Head of caudate nucleus (tissue), 42 donors: ENCODE measurements at regions of chr4 and their contacts with region 1.

Region 1: GRCh38 chr4:39181905-39182638 is at the start of gene WDR19:
- DNase-seq: peak; percentile 97 to 100 (median 100)

Region 2: DNA sequence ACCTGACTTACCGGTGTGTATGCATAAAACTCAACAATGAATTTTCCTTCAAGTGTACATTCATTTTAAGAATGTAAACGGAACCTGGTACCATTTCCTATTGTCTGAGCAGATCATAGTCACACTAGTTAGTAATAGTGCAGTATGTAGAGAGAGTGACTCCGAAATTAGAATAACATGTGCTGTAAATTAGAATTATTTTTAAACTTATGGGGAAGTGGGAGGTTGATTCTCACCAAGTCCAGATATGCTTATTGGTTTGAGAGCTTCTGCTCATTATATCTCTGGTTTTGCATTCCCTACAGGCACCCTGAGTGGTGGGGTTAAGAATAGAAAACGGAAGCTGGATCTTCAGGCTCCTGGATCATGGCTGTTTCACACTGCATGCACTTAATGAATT is 478.4 kb before region 1 on chr4:
- intact Hi-C with region 1: no loop called
- DNase-seq: no peak

Region 3: DNA sequence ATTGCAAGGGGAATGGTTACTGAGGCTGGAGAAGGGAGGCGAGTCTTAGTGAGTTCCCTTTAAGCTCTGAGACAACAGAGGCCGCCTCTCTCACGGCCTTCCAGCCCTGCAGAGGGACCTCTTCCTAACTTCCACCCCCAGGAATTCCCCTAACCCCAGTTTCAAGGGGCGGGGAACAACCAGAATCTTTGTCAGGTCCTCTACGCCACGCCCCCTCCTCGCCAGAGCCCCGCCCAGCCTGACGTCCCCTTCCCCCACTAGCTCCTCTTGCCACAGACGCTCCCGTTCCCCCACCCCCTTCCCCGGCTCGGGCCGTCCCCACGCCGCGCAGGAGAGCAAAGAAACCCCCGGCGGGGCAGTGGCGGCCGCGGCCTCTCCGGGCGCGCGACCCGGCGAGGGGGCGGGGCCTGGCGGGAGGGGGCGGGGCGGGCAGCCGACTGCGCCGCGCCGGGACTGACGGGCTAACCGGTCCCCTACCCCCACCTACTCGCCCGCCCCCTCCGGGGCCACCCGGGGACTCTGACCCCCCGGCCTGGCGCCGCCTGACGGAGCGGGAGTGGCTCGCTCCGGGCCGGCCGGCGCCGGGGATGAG is 137.6 kb before region 1 on chr4:
- intact Hi-C with region 1: loop called (anchors 10 kb)
- DNase-seq: peak; percentile 78 to 95 (median 90)

Region 4: DNA sequence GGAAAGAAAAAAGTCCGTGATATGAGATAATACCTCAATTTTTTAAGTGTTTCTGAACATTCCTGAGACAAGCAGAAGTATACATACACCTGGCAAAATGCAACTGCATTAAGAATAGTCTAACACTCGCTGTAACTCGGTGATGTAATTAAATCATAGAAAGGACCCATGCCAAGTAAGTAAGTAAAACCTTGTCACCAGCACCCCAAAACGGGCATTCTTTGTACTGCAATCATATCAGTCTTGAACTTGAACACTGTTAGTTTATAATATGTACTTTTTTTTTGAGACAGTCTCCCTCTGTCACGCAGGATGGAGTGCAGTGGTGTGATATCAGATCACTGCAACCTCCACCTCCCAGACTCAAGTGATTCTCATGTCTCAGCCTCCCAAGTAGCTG is 409.2 kb after region 1 on chr4:
- intact Hi-C with region 1: no loop called
- DNase-seq: no peak